ENCODE measurements at regions of chr22 and their contacts with region 1.

Region 1: GRCh38 chr22:28009272-28009827 is 90.3 kb upstream of the PITPNB start:
- DNase-seq: peak; percentile 90
- H3K4me3 ChIP-seq: no peak overlapping the region
- H3K27ac ChIP-seq: no peak overlapping the region
- H3K4me1 ChIP-seq: peaks cover 0 to 25% (median 6%) of the 10 kb centered on the region in 6 donors
- H3K27me3 ChIP-seq: no peaks in the 10 kb centered on the region
- CTCF ChIP-seq: peak; percentile 83 to 94 (median 87)
- POLR2A ChIP-seq: no peak

Region 2: DNA sequence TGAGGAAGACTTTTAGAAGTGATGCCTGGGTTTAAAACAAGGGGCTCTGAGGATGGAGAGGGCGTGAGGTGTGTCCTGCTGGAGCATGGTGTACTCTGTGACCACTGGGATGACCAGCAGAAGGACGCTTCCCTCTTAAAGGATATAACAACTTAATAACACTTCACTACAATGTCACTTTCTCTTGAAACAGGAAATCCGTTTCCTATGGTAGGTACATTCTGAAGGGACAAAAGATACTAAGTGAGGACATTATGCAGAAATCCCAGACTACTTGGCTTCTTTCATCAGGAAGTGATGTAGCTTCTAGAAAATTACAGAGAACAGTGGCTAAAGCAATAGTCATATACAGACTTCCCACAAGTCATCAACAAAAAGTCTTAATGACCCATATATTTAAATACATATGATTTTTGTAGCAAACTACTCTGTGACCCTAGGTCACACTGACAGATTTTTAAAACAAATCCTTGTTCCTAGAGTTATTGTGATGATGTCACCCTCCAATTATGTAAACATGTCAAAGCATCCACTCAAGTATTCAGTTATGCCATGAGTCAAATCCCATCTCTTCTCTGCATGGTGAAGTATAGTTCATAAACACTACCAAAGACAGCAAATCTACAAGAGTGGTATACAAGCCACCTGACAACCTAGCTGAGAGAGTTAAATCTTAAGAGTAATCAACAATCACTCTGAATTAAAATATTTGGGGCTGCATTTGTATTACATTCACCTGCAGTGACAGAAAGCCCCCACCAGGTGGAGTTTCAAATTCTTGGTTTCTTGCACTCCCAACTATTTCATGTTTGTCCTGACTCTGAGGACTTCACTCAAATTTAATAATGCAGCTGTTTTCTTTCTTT is 123.1 kb before region 1 on chr22:
- intact Hi-C with region 1: loop called (anchors 5 kb)
- DNase-seq: no peak
- H3K4me3 ChIP-seq: no peak overlapping the region
- H3K27ac ChIP-seq: peak overlapping the region in 6 of 8 donors; percentile 2 to 28 (median 16)
- H3K4me1 ChIP-seq: peaks cover 9 to 35% (median 17%) of the 10 kb centered on the region in 6 donors
- H3K27me3 ChIP-seq: no peaks in the 10 kb centered on the region
- CTCF ChIP-seq: peak; percentile 74 to 89 (median 82)
- POLR2A ChIP-seq: no peak

Region 3: GRCh38 chr22:28172892-28173670 is 163.7 kb after region 1 on chr22:
- intact Hi-C with region 1: no loop called
- DNase-seq: no peak
- H3K4me3 ChIP-seq: no peak overlapping the region
- H3K27ac ChIP-seq: no peak overlapping the region
- H3K4me1 ChIP-seq: no peaks in the 10 kb centered on the region
- H3K27me3 ChIP-seq: no peaks in the 10 kb centered on the region
- CTCF ChIP-seq: no peak
- POLR2A ChIP-seq: no peak

Measured in spleen (tissue), 13 donors.